ENCODE measurements at regions of chr9 and their contacts with region 1.

Region 1: DNA sequence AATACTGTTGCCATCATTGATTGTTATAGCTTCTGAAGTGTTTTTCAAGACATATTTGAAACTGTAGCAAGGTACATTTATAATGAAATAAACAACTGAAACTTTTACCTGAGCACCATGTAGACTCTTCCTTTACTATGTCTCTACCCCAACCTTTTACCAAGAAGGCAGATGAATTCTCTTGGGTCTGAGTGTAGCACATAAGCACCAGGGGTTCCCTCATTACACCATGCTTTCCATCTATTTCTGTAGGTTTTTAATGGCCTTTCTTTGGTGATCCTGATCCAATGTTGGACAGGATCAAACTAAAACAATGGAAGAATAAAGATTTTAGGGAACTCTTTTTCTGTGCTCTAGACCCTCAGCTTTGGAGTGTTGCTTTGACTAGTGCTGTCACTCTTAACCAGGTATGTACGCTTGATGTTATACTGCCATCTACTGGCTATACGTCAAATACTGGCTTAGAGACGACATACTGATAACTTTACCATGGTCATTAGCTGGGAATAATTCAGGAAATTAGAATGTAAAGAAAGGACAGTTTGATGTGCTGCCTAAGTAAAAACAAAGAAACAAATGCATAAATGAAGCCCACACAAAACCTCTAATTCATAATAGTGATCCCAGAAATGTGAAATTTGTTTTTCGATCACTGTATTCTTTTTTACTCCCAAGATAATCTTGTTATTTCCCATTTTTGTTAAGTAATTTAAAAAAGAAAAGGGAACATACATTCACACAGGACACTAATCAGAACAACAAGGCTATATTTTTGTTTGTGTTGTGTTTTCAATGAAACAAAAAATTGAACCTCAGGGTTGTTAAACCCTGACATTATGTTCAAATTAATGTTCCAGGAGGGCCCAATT is 30.7 kb downstream of the IFNW1 start:
- DNase-seq: peak in 1 of 2 donors; percentile 87
- ATAC-seq: peak; percentile 92 to 97 (median 96)
- H3K4me3 ChIP-seq: no peak overlapping the region
- H3K4me3 Mint-ChIP-seq: no peak overlapping the region
- H3K27ac ChIP-seq: no peak overlapping the region
- H3K27ac Mint-ChIP-seq: no peak overlapping the region
- H3K4me1 ChIP-seq: no peaks in the 10 kb centered on the region
- H3K4me1 Mint-ChIP-seq: no peaks in the 10 kb centered on the region
- H3K27me3 ChIP-seq: no peaks in the 10 kb centered on the region
- H3K27me3 Mint-ChIP-seq: peaks cover 0 to 3% of the 10 kb centered on the region in 2 donors
- CTCF ChIP-seq: peak; percentile 98

Region 2: GRCh38 chr9:19925817-19926503 is 1185.0 kb before region 1 on chr9:
- intact Hi-C with region 1: loop called (anchors 1 kb)
- DNase-seq: peak; percentile 54 to 90
- ATAC-seq: peak; percentile 93 to 100 (median 99)
- H3K4me3 ChIP-seq: no peak overlapping the region
- H3K4me3 Mint-ChIP-seq: peak overlapping the region; percentile 60
- H3K27ac ChIP-seq: no peak overlapping the region
- H3K27ac Mint-ChIP-seq: no peak overlapping the region
- H3K4me1 ChIP-seq: peaks cover 6% of the 10 kb centered on the region
- H3K4me1 Mint-ChIP-seq: peaks cover 8% of the 10 kb centered on the region in 2 donors
- H3K27me3 ChIP-seq: no peaks in the 10 kb centered on the region
- H3K27me3 Mint-ChIP-seq: peaks cover 8 to 51% of the 10 kb centered on the region in 2 donors
- CTCF ChIP-seq: peak; percentile 96